ENCODE measurements at regions of chr16 and their contacts with region 1.

Region 1: GRCh38 chr16:30692381-30693064 is 6.4 kb upstream of the SRCAP start:
- DNase-seq: no peak
- H3K4me3 Mint-ChIP-seq: no peak overlapping the region
- H3K27ac Mint-ChIP-seq: peak overlapping the region; percentile 8
- H3K4me1 Mint-ChIP-seq: peaks cover 26% of the 10 kb centered on the region
- H3K27me3 Mint-ChIP-seq: no peaks in the 10 kb centered on the region

Region 2: DNA sequence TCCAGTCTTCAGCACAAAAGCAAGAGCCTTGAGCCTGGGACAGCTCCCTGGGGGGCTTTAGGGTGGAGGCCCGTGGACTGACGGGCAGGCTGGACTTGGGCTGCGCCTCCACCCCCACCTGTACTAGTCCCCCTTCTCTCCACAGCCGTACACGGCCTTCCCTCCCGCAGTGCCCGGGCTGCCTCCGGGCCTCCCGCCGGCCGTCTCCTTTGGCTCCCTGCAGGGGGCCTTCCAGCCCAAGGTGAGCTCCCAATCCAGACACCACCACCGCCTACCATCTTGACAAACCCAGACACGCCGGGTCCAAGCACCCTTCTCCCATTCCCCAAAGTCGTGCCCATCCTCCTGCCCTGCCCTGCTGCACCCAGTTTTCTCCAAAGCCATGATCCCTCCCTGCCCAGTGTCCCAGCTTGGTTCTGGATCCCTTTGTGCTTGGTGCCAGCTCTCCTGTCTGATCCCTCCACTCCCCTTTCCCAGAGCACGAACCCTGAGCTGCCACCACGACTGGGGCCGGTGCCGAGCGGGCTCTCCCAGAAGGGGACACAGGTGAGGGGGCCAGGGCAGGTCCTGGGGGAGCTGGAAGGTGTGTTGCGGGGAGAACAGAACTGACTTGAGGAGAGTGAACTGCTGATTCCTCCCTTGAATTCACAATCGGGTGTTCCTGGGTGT is 27.2 kb before region 1 on chr16:
- CTCF ChIA-PET with region 1: interaction called, 67 read pairs
- POLR2A ChIA-PET with region 1: interaction called, 68 read pairs
- DNase-seq: no peak
- H3K4me3 Mint-ChIP-seq: no peak overlapping the region
- H3K27ac Mint-ChIP-seq: no peak overlapping the region
- H3K4me1 Mint-ChIP-seq: peaks cover 36% of the 10 kb centered on the region
- H3K27me3 Mint-ChIP-seq: no peaks in the 10 kb centered on the region

Region 3: DNA sequence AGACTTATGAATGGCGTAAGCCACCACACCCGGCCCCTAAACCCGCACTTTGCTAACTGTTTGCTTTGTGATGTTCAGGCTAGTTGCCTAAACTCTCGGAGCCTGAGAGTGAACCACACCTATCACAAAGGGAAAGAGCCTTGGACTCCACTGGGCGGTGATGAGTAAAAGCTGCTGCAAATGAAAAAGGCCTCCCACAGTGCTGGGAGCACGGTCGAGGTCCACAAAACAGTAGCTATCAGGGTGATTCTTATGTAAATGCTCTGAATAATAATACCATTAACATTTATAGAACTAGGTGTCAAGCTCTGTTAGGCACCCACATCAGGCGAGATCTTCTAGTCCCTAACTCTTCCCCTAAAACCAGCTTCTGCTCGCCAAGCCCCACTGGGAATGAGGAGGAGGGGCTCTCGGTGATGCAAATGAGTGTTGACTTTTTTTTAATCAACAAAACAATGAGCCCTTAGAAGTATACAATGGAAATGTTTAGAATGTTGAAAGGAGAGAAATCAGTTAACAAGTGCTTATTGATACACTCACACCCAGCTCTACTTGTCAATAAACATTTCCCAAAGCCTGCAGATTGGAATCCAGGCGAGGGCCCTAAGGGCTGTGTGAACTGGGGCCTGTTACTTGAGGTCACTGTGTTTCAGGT is 14.5 kb before region 1 on chr16:
- CTCF ChIA-PET with region 1: interaction called, 14 read pairs
- POLR2A ChIA-PET with region 1: interaction called, 4 read pairs
- DNase-seq: no peak
- H3K4me3 Mint-ChIP-seq: no peak overlapping the region
- H3K27ac Mint-ChIP-seq: no peak overlapping the region
- H3K4me1 Mint-ChIP-seq: no peaks in the 10 kb centered on the region
- H3K27me3 Mint-ChIP-seq: no peaks in the 10 kb centered on the region

Region 4: DNA sequence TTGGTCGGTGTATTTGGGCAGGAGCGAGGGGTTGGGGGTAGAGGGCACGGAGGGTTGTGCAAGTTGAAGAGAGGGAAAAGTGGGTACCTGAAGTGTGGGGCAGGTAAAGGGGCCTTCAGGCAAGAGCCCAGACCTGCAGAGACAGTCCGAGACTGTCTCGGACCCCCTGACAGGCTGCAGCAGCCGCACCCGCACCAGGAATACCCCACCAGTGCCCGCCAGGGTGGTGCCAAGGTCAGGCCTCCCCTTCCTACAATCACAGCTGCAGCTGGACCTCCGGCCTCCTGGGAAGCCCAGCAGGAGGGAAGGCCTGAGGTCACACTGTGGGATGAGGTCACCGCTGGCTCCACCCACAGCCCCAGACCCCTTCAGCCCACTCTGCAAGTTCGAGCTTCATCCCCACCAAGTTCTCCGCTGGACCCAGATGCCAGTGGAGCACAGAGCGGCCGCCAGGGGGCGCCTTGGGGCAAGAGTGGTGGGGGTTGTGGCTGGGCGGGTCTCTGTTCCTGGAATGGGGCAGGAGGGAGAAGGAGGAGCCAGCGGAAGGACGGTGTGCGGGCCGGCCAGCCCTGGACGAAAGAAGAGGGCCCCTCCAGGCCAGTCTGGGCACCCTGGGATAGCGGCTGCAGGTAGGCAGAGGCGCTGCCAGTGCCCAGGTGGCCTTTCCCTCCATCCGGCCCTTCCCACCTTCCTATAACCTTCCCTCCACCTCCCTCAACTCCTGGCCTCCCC is 292.3 kb after region 1 on chr16 and contains the start of gene HSD3B7:
- CTCF ChIA-PET with region 1: no interaction called
- POLR2A ChIA-PET with region 1: no interaction called
- DNase-seq: peak; percentile 85
- H3K4me3 Mint-ChIP-seq: peak within 1 kb of the TSS; percentile 39
- H3K27ac Mint-ChIP-seq: no peak within 1 kb of the TSS
- H3K4me1 Mint-ChIP-seq: peaks cover 14% of the 10 kb centered on the region
- H3K27me3 Mint-ChIP-seq: no peaks in the 10 kb centered on the region
- total RNA-seq, gene HSD3B7: 7.1 to 7.5 TPM

Region 5: DNA sequence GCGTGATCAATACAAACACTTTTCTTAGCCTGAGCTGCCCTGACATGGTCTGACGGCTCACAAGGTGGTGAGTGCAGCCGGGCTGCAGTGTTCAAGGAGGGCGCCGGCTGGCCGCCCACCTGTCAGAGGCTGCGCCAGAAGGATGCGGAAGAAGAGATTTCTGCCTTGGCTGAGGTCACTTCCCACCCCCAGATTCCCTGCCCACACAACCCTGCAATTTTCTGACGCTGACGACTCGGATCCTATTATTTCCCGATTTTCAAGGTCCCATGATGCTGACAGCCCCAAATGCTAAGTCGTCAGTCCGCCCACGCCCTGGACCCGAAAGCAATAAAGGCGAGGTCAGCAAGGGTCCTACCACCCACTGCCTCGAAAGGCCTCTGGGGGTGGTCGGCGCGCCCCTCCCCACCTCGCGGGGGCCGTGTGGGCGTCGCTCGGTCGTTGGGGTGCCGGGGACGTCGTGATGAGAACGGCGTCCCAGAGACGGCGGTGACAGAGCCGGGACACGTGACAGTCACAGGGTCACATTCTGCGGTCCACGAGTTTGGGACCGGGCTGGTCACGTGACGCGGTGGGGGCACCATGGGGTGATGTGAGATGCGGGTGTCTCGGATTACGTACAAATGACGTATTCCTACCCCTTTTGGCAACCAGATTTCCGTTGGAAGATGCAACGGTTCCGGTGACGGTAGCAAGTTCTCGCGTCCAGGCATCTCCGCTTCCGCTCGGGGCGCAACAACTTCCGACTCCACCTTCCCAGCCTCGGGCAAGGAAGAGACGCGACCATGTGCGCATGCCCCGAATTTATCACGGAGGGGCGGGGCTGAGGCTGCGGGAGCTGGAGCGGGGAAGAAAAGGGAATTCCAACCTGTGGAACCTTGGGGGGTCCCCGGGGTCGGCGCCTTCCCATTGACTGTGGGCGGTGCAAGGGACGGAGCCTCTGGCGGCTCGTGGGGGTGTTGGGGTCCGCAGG is 340.5 kb after region 1 on chr16 and contains the start of gene STX4:
- CTCF ChIA-PET with region 1: no interaction called
- POLR2A ChIA-PET with region 1: no interaction called
- DNase-seq: peak; percentile 98
- H3K4me3 Mint-ChIP-seq: peak within 1 kb of the TSS; percentile 86
- H3K27ac Mint-ChIP-seq: peak within 1 kb of the TSS; percentile 79
- H3K4me1 Mint-ChIP-seq: peaks cover 28% of the 10 kb centered on the region
- H3K27me3 Mint-ChIP-seq: no peaks in the 10 kb centered on the region
- total RNA-seq, gene STX4: 67.2 to 70.0 TPM

Measured in activated CD4-positive, alpha-beta memory T cell treated with anti-CD3 and anti-CD28 coated beads, Interleukin-2, amount 10 ng/mL, durations not matched to agents 7 days and 5 days (primary cell).